IMR-90 (cell line): ENCODE measurements at regions of chr1 and their contacts with region 1.

Region 1: DNA sequence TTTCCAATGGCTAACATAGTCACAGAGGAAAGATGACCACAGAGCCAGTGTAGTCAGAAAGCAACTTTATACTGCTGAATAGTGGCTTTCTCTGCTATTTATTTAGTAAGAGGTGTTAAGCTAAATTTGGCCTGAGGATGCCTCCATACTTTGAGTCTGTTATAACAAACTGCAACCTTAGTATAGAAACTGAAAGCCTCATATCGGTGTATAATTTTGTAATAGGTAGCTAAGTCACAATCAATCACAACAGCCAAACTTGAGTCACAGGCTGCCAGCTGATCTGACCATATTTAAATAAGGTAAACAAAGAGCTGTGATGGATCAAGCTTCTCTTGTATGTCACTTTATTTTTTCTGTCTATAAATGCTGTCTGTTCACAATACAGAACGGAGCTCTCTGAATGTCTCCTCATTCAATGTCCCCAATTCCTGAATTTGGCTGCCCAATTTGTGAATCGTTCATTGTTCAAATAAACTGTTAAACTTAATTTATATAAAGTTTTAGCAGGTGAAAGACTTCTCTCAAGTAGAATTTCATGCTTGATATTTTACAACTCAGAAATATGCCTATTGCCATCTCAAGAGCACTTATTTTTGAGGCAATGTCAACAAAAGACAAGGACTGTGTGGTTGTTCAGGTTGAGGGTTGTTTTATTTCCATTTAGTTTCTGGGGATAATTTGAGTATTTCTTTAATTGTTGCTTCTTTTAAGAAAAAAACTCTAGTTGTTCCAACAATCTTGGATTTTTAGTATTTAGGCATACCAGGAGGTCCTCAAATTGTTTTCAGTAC is 339.7 kb upstream of the B3GALT2 start:
- DNase-seq: no peak
- ATAC-seq: no peak
- H3K4me3 ChIP-seq: no peak overlapping the region
- H3K27ac ChIP-seq: no peak overlapping the region
- H3K4me1 ChIP-seq: no peaks in the 10 kb centered on the region
- H3K27me3 ChIP-seq: no peaks in the 10 kb centered on the region
- CTCF ChIP-seq: no peak
- POLR2A ChIP-seq: no peak
- RAD21 ChIP-seq: no peak

Region 2: DNA sequence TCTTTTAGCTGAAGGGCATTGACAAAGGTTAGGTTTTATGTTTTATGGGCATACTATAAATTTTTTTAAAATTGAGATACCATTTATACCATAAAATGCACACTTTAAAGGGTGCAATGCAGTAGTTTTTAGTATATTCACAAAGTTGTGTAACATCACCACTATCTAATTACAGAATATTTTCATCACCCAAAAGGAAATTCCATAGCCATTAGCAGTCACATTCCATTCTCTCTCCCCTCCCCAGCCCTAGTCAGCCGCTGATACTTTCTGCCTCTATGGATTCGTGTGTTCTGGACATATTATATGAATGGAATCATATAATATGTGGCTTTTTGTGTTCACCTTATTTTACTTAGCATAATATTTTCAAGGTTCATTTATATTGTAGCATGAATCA is 203.9 kb before region 1 on chr1:
- CTCF ChIA-PET with region 1: no interaction called
- POLR2A ChIA-PET with region 1: no interaction called
- dilution Hi-C with region 1: no loop called
- in situ Hi-C with region 1: no loop called
- intact Hi-C with region 1: no loop called
- DNase-seq: peak; percentile 84
- ATAC-seq: peak; percentile 92
- H3K4me3 ChIP-seq: no peak overlapping the region
- H3K27ac ChIP-seq: peak overlapping the region; percentile 88
- H3K4me1 ChIP-seq: peaks cover 6% of the 10 kb centered on the region; the same call in 1 of the 2 replicates
- H3K27me3 ChIP-seq: no peaks in the 10 kb centered on the region
- CTCF ChIP-seq: no peak
- POLR2A ChIP-seq: no peak
- RAD21 ChIP-seq: no peak

Region 3: DNA sequence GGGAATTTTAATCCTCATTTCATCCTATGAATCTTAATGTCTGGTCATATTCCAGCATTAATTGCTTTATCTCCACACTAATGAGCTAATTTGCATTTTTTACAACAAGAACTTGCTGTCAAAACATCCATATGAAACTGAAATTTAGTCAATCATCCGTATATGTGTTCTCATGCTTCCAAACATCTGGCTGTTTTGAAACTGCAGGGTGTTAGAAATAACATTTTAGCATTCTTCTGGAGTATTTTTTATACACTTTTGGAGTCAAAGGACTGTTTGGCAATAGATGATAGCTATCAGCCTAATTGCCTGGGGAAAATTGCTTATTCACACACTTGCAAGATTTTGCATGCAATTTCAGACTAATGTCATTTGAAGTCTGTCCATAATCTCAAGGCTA is 1442.8 kb after region 1 on chr1:
- CTCF ChIA-PET with region 1: interaction called, 12 read pairs
- POLR2A ChIA-PET with region 1: no interaction called
- dilution Hi-C with region 1: no loop called
- in situ Hi-C with region 1: no loop called
- intact Hi-C with region 1: no loop called
- DNase-seq: no peak
- ATAC-seq: no peak
- H3K4me3 ChIP-seq: no peak overlapping the region
- H3K27ac ChIP-seq: no peak overlapping the region
- H3K4me1 ChIP-seq: no peaks in the 10 kb centered on the region
- H3K27me3 ChIP-seq: no peaks in the 10 kb centered on the region
- CTCF ChIP-seq: no peak
- POLR2A ChIP-seq: no peak
- RAD21 ChIP-seq: no peak